H1 (cell line): ENCODE measurements at regions of chr3 and their contacts with region 1.

Region 1: DNA sequence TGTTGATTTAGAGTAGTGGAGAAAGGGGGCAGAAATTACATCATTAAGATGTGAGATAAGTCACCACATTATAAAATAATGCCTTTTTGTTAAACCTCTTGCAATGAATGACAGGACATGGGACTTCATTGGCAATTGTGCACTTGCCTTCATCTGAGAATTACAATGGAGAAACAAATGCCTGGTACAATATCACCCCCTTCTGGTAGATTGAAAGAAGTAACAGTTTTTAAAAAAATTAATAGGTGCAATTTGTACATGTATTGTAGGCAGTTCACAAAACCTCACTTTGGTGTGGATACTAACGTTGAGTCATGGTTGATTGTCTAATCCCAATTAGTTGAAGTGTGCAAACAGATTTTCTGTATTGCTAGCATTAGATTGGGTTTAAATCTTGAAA is 4.6 kb upstream of the P2RY14 start:
- DNase-seq: no peak
- H3K4me3 ChIP-seq: no peak overlapping the region
- H3K27ac ChIP-seq: no peak overlapping the region
- H3K4me1 ChIP-seq: no peaks in the 10 kb centered on the region; a peak in 1 of 7 replicates
- H3K27me3 ChIP-seq: no peaks in the 10 kb centered on the region
- CTCF ChIP-seq: peak in 2 of 3 experiments; percentile 53 to 57; a peak in 2 of 4 replicates
- EP300 ChIP-seq: no peak
- POLR2A ChIP-seq: no peak
- RAD21 ChIP-seq: peak; percentile 79

Region 2: DNA sequence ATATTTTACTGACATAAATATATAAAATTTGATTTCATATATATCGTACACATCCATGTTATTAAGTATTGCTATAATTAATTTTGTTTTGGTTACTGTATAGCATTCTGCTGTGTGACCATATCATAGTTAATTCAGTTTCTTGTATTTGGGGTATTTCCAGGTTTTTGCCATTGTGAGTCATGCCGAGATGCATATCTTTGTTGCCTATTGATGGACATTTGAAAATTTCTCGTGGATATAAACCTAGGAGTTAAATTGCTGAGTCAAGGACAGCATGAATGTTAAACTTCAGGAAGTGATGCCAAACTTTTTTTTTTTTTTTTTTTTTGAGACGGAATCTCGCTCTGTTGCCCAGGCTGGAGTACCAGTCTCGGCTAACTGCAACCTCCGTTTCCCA is 46.2 kb before region 1 on chr3:
- CTCF ChIA-PET with region 1: interaction called, 11 read pairs
- POLR2A ChIA-PET with region 1: no interaction called
- DNase-seq: no peak
- H3K4me3 ChIP-seq: no peak overlapping the region
- H3K27ac ChIP-seq: no peak overlapping the region
- H3K4me1 ChIP-seq: peaks cover 0 to 4% (median 2%) of the 10 kb centered on the region in 4 experiments; a peak in 1 of 7 replicates
- H3K27me3 ChIP-seq: no peaks in the 10 kb centered on the region
- CTCF ChIP-seq: no peak
- EP300 ChIP-seq: no peak
- POLR2A ChIP-seq: no peak
- RAD21 ChIP-seq: no peak